Spleen (tissue), 13 donors: ENCODE measurements at regions of chr5 and their contacts with region 1.

Region 1: GRCh38 chr5:148730943-148731861 is 76.9 kb upstream of the HTR4 start:
- DNase-seq: no peak
- H3K4me3 ChIP-seq: peak overlapping the region in 3 of 8 donors; percentile 23 to 48 (median 28)
- H3K27ac ChIP-seq: peak overlapping the region in 5 of 8 donors; percentile 29 to 56 (median 50)
- H3K4me1 ChIP-seq: peaks cover 0 to 28% (median 10%) of the 10 kb centered on the region in 6 donors
- H3K27me3 ChIP-seq: no peaks in the 10 kb centered on the region
- CTCF ChIP-seq: peak; percentile 73 to 93 (median 87)
- POLR2A ChIP-seq: no peak

Region 2: GRCh38 chr5:148179234-148179824 is 551.9 kb before region 1 on chr5:
- intact Hi-C with region 1: loop called (anchors 5 kb)
- DNase-seq: no peak
- H3K4me3 ChIP-seq: no peak overlapping the region
- H3K27ac ChIP-seq: no peak overlapping the region
- H3K4me1 ChIP-seq: no peaks in the 10 kb centered on the region
- H3K27me3 ChIP-seq: no peaks in the 10 kb centered on the region
- CTCF ChIP-seq: peak in 10 of 11 experiments; percentile 5 to 74 (median 58)
- POLR2A ChIP-seq: no peak

Region 3: DNA sequence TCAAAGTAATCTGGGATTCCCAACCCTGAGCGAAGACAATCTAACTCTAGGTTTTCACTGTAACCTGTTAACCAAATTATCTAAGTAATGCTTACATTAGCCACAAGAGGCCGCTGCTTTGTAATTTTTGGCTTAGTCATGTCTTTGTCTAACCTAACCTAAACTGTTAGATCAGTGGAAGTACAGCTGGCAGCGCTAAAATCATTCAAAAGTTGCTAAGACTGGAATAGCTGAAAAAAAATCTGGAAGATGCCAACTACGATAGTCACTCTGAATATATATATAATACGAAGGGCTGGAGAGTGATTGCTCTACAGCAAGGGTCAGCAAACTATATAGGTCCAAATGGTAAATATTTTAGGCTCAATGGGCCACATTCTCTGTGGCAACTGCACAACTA is 287.2 kb before region 1 on chr5:
- intact Hi-C with region 1: loop called (anchors 2 kb)
- DNase-seq: no peak
- H3K4me3 ChIP-seq: no peak overlapping the region
- H3K27ac ChIP-seq: no peak overlapping the region
- H3K4me1 ChIP-seq: no peaks in the 10 kb centered on the region
- H3K27me3 ChIP-seq: no peaks in the 10 kb centered on the region
- CTCF ChIP-seq: peak; percentile 32 to 79 (median 70)
- POLR2A ChIP-seq: no peak

Region 4: GRCh38 chr5:149035372-149035790 is 304.2 kb after region 1 on chr5:
- intact Hi-C with region 1: loop called (anchors 5 kb)
- DNase-seq: peak; percentile 91
- H3K4me3 ChIP-seq: no peak overlapping the region
- H3K27ac ChIP-seq: no peak overlapping the region
- H3K4me1 ChIP-seq: peaks cover 0 to 42% (median 17%) of the 10 kb centered on the region in 6 donors
- H3K27me3 ChIP-seq: peaks cover 0 to 6% (median 0%) of the 10 kb centered on the region in 7 donors
- CTCF ChIP-seq: peak; percentile 52 to 90 (median 81)
- POLR2A ChIP-seq: no peak

Region 5: DNA sequence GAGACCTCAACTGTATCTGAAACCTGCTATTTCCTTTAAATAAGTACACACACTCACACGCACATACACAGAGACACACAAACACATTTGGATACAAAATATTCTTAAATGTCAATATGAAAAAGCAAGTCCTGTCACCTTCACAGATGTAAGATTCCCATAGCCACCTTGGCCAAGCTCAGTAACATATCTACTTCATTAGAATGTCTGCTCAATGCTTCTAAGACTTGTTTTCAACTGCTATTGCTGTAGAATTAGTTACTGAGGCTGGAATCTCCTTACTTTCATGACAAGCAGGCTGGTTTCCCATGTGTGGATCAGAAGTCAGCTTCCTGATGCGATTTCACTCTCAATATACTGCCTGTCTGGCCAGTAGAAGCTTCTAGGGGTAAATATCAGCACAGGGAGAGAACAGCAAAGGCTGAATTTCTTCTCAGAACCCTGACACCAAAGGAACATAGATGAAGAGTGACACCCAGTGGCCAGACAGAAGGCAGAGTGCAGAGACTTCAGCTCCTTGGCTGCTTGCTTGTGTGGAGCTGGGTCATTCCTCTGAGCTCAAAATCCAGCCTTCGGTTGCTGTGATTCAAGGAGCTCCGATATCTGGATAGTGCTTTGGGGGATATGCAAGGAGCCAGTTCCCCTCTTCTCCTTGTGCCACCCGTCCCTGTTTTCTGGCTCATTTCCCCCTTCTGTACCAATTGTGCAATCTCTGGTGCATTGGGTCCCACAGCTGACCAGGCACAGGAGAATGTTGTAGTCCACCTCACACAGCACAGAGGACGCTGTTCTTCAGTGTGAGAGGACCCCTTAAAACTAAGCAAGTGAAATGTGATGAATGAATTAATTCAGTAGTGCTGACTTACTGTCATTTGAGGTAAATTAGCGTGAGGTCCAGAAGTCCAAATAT is 383.5 kb after region 1 on chr5:
- intact Hi-C with region 1: loop called (anchors 10 kb)
- DNase-seq: no peak
- H3K4me3 ChIP-seq: no peak overlapping the region
- H3K27ac ChIP-seq: no peak overlapping the region
- H3K4me1 ChIP-seq: peaks cover 0 to 9% (median 5%) of the 10 kb centered on the region in 6 donors
- H3K27me3 ChIP-seq: peaks cover 0 to 10% (median 0%) of the 10 kb centered on the region in 7 donors
- CTCF ChIP-seq: peak; percentile 33 to 81 (median 63)
- POLR2A ChIP-seq: no peak